Activated CD8-positive, alpha-beta T cell treated with anti-CD3 and anti-CD28 coated beads for 36 hours (primary cell): ENCODE measurements at regions of chr6 and their contacts with region 1.

Region 1: DNA sequence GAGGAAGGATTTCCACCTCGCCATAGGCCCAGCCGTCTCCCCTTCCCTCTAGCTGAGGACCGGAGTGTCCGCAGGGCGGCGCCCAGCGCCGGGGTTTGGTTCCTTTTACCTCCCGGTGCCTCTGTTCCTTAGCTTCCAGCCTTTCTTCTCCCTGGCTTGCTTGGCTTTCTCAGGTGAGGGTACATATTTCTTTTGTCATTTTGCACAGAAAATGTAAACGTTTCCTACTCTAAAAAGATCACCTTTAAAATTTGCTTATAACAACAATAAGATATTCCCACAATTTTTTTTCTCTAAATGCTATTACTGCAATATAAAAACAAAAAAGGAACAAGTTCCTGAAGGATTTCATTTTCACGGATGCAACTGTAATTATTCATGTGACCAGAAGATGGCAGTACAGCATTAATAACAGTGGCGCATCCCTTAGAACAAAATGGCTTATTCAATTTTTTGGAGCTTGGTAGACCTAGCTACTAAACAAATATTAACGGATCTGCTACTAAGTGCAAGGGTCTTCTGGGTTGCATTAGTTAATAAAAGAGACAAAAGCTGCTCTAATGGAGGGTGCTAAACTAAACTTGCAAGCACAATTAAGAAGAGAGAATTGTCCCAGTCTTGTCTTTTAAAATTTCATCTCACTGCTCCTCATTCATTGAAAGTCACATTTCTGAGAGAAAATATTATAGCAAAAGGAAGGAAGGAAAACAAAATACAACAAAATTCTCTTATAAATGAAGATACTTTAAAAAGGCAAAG is 172.9 kb downstream of the ADGRG6 start:
- DNase-seq: no peak
- ATAC-seq: no peak
- H3K4me3 Mint-ChIP-seq: no peak overlapping the region
- H3K27ac Mint-ChIP-seq: no peak overlapping the region
- H3K4me1 Mint-ChIP-seq: peaks cover 5% of the 10 kb centered on the region
- H3K27me3 Mint-ChIP-seq: no peaks in the 10 kb centered on the region
- CTCF ChIP-seq: peak; percentile 90

Region 2: GRCh38 chr6:142485256-142485655 is 10.5 kb after region 1 on chr6:
- CTCF ChIA-PET with region 1: interaction called, 18 read pairs
- POLR2A ChIA-PET with region 1: no interaction called
- intact Hi-C with region 1: no loop called
- DNase-seq: no peak
- ATAC-seq: no peak
- H3K4me3 Mint-ChIP-seq: no peak overlapping the region
- H3K27ac Mint-ChIP-seq: no peak overlapping the region
- H3K4me1 Mint-ChIP-seq: no peaks in the 10 kb centered on the region
- H3K27me3 Mint-ChIP-seq: peaks cover under 1% of the 10 kb centered on the region
- CTCF ChIP-seq: no peak

Region 3: GRCh38 chr6:142551274-142551811 is 76.6 kb after region 1 on chr6:
- CTCF ChIA-PET with region 1: interaction called, 16 read pairs
- POLR2A ChIA-PET with region 1: no interaction called
- intact Hi-C with region 1: no loop called
- DNase-seq: peak; percentile 82
- ATAC-seq: peak; percentile 97
- H3K4me3 Mint-ChIP-seq: no peak overlapping the region
- H3K27ac Mint-ChIP-seq: no peak overlapping the region
- H3K4me1 Mint-ChIP-seq: peaks cover 26% of the 10 kb centered on the region
- H3K27me3 Mint-ChIP-seq: no peaks in the 10 kb centered on the region
- CTCF ChIP-seq: no peak

Region 4: GRCh38 chr6:142679907-142680700 is 205.4 kb after region 1 on chr6:
- CTCF ChIA-PET with region 1: interaction called, 6 read pairs
- POLR2A ChIA-PET with region 1: no interaction called
- intact Hi-C with region 1: loop called (anchors 5 kb)
- DNase-seq: peak; percentile 52
- ATAC-seq: peak; percentile 87
- H3K4me3 Mint-ChIP-seq: no peak overlapping the region
- H3K27ac Mint-ChIP-seq: no peak overlapping the region
- H3K4me1 Mint-ChIP-seq: peaks cover 13% of the 10 kb centered on the region
- H3K27me3 Mint-ChIP-seq: peaks cover 1% of the 10 kb centered on the region
- CTCF ChIP-seq: no peak

Region 5: DNA sequence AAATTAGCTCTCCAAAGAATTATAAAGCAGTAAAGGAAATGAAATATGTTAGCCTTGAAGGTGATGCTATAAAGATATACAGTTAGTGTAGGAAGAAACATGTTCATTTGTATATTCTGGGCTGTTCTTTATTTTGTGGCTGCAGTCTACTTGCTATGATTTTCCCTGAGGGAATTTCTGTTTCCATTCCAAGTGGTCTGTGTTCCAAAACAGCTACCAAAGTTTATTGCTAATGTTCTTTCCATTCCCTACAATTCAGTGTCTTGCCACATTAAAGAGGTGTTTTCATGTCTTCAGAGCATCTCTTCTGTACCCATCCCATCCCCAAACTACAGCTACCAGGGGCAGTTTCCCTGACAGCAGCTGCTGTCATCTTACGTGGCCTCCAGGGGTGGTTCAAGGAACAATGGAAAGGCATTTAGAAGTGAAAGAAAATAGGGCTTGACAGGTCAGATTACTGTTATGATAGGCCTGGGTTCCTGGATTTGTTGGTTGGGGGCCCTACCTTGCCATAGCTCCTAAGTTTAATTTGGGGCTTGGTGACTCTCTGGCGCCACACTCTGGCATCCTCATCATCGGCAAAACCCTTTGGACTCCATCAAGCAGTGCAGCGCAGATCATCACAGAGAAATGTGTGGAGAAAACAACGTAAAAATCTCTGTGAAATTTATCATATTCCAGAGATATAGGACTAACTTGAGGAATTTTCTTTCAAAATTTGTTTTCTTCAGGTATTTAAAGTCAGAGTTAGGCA is 552.2 kb after region 1 on chr6:
- CTCF ChIA-PET with region 1: interaction called, 8 read pairs
- POLR2A ChIA-PET with region 1: no interaction called
- intact Hi-C with region 1: loop called (anchors 10 kb)
- DNase-seq: peak; percentile 72
- ATAC-seq: peak; percentile 71
- H3K4me3 Mint-ChIP-seq: no peak overlapping the region
- H3K27ac Mint-ChIP-seq: peak overlapping the region; percentile 16
- H3K4me1 Mint-ChIP-seq: peaks cover 8% of the 10 kb centered on the region
- H3K27me3 Mint-ChIP-seq: no peaks in the 10 kb centered on the region
- CTCF ChIP-seq: peak; percentile 81